ENCODE measurements at regions of chr1 and their contacts with region 1.

Region 1: GRCh38 chr1:145826030-145826429 is 2.0 kb downstream of the POLR3C start:
- DNase-seq: no peak
- CTCF ChIP-seq: no peak

Region 2: GRCh38 chr1:145777357-145778145 is 48.5 kb before region 1 on chr1:
- in situ Hi-C with region 1: loop called (anchors 5 kb)
- DNase-seq: no peak
- CTCF ChIP-seq: no peak